Dendritic cell treated with granulocyte-macrophage colony-stimulating factor and Interleukin-4, amounts not matched to agents 40 ng/mL and 50 ng/mL, for 4 days (primary cell): ENCODE measurements at regions of chr1 and their contacts with region 1.

Region 1: GRCh38 chr1:156659994-156660751 is 17.0 kb downstream of the NES start:
- H3K4me3 Mint-ChIP-seq: peak overlapping the region; percentile 11
- H3K27ac Mint-ChIP-seq: peak overlapping the region; percentile 45
- H3K4me1 Mint-ChIP-seq: peaks cover 94% of the 10 kb centered on the region
- H3K27me3 Mint-ChIP-seq: peaks cover 61% of the 10 kb centered on the region

Region 2: GRCh38 chr1:155591770-155592169 is 1068.4 kb before region 1 on chr1:
- intact Hi-C with region 1: no loop called
- H3K4me3 Mint-ChIP-seq: no peak overlapping the region
- H3K27ac Mint-ChIP-seq: no peak overlapping the region
- H3K4me1 Mint-ChIP-seq: no peaks in the 10 kb centered on the region
- H3K27me3 Mint-ChIP-seq: no peaks in the 10 kb centered on the region

Region 3: DNA sequence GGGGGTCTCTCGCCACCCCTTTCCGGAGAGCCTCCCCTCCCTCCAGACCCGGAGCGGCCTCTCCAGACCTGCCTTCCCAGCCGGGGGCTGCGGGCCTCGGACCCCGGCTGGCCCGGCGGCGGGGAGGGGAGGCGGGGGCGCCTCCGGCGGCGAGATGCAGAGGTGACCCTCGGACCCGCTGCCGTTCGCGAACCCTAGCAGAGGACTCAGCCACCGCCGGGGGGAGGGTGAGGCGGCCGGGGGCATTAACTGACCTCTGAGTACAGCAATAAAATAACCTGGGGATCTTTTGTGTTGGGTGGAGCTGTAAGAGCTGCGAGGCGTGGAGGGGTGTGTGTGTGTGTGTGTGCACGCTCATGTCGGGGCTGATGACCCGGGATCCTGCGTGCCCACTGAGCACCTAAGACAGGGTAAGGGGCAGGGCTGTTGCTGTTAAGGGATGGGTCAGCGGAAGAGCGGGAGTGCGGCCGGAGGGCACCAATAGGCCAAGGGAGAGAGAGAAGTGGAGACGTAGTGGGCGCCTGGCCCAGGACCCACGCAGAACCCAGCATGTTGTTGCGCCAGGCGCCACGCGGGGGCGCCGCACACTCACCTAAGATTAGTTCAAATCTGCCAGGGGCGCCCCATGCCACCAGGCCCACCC is 34.6 kb before region 1 on chr1:
- intact Hi-C with region 1: loop called (anchors 1 kb)
- H3K4me3 Mint-ChIP-seq: peak overlapping the region; percentile 24
- H3K27ac Mint-ChIP-seq: no peak overlapping the region
- H3K4me1 Mint-ChIP-seq: peaks cover 15% of the 10 kb centered on the region
- H3K27me3 Mint-ChIP-seq: peaks cover 88% of the 10 kb centered on the region

Region 4: DNA sequence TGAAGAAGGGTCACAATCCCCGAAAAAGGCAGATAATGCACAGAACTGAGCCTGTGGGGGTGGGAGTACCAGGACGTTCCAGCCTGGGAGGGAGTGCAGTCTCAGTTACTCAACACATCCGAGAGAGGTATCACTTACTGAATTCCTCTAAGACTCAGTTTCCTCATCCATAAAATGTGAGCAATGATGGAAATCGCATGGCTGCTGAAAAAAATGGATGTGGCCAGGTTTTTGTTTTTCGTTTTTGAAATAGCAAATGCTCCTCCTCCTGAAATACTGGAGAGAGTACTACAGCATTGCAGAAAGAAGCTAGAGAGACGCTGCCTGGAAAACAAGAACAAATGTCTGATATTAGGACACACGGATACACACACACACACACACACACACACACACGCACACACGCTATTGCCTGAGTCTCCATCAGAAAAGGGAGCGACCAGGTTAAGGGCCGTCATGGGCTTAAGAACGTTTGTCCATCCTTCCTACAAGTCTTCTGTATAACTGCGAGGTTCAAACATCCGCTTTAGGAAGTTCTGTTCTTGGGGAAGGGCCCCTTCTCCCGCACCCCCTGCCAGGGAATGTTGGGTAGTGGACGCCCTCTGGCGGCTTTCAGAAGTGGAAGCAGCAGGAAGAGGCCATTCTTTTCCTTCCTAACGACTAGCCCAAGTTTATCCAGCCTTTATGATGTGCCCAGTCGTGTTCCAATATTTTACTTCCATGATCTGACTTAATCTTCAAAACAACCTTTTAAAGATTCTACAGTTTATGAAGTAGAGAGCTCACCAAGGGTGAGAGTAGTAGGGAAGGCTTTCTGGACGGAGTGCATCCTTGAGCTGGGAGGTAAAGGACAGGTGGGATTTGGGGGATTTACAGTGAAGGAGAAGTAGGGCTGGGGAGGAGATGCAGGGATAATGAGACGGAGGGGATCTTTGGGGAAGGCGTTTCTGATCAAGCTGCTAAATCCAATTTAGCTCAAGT is 17.7 kb after region 1 on chr1:
- intact Hi-C with region 1: loop called (anchors 2 kb)
- H3K4me3 Mint-ChIP-seq: no peak overlapping the region
- H3K27ac Mint-ChIP-seq: no peak overlapping the region
- H3K4me1 Mint-ChIP-seq: peaks cover 22% of the 10 kb centered on the region
- H3K27me3 Mint-ChIP-seq: peaks cover 96% of the 10 kb centered on the region